HCT116 (cell line): ENCODE measurements at regions of chr11 and their contacts with region 1.

Region 1: GRCh38 chr11:11243590-11244469 is 109.2 kb downstream of the CSNK2A3 start:
- DNase-seq: no peak
- ATAC-seq: peak; percentile 93
- H3K4me3 ChIP-seq: no peak overlapping the region
- H3K27ac ChIP-seq: no peak overlapping the region
- H3K4me1 ChIP-seq: no peaks in the 10 kb centered on the region
- H3K27me3 ChIP-seq: no peaks in the 10 kb centered on the region
- CTCF ChIP-seq: no peak
- POLR2A ChIP-seq: no peak
- RAD21 ChIP-seq: no peak

Region 2: GRCh38 chr11:11038352-11038751 is 205.5 kb before region 1 on chr11:
- CTCF ChIA-PET with region 1: no interaction called
- POLR2A ChIA-PET with region 1: no interaction called
- RAD21 ChIA-PET with region 1: no interaction called
- intact Hi-C with region 1: no loop called
- DNase-seq: no peak
- ATAC-seq: no peak
- H3K4me3 ChIP-seq: no peak overlapping the region
- H3K27ac ChIP-seq: no peak overlapping the region
- H3K4me1 ChIP-seq: no peaks in the 10 kb centered on the region
- H3K27me3 ChIP-seq: no peaks in the 10 kb centered on the region
- CTCF ChIP-seq: no peak
- POLR2A ChIP-seq: no peak
- RAD21 ChIP-seq: no peak

Region 3: GRCh38 chr11:11186249-11186648 is 57.6 kb before region 1 on chr11:
- CTCF ChIA-PET with region 1: no interaction called
- POLR2A ChIA-PET with region 1: no interaction called
- RAD21 ChIA-PET with region 1: no interaction called
- intact Hi-C with region 1: loop called (anchors 2 kb)
- DNase-seq: no peak
- ATAC-seq: no peak
- H3K4me3 ChIP-seq: no peak overlapping the region
- H3K27ac ChIP-seq: no peak overlapping the region
- H3K4me1 ChIP-seq: no peaks in the 10 kb centered on the region
- H3K27me3 ChIP-seq: no peaks in the 10 kb centered on the region
- CTCF ChIP-seq: no peak
- POLR2A ChIP-seq: no peak
- RAD21 ChIP-seq: no peak